PC-9 (cell line): ENCODE measurements at regions of chrX and their contacts with region 1.

Region 1: DNA sequence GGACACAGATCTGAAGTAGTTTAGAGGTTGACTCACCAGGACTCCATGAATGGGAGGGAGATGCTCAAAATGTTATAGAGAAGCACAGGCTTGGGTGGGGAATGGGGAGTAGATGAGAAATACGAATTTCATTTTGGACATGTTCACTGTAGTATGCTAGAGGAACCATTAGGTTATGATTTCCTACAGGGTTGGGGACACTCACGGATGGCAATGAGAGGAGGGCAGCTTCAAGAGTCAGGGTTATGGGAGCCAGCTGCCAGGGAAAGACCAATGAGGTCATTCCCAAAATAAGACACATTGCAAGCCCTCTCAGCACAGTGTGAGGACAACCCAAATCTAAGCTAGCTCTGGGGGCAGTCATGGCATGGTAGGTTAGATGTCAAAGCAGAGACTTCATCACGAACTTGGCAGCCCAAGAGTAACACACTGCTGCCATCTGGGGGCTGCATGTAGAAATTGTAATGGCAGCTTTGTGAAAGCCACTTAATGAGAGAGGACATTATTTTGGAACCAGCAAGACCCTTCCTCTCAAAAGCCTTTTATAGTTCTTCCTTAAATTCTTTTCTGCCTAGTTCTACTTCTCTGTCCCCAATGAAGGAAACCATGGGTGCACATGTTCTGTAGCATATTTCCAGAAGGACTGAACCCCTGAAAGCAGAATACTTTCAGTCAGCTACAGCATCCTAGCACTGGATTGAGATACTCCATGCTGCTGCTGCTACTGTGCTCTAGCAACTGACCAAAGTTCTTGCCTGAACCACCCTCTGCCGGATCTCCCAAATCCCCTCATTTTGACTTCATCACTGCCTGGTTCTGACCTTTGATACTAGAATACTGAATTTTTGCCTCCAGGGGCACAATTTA is 16.2 kb upstream of the ZCCHC12 start:
- DNase-seq: peak; percentile 44 to 53
- H3K4me3 ChIP-seq: no peak overlapping the region
- H3K27ac ChIP-seq: no peak overlapping the region
- H3K4me1 ChIP-seq: no peaks in the 10 kb centered on the region
- H3K27me3 ChIP-seq: no peaks in the 10 kb centered on the region
- CTCF ChIP-seq: peak; percentile 88

Region 2: DNA sequence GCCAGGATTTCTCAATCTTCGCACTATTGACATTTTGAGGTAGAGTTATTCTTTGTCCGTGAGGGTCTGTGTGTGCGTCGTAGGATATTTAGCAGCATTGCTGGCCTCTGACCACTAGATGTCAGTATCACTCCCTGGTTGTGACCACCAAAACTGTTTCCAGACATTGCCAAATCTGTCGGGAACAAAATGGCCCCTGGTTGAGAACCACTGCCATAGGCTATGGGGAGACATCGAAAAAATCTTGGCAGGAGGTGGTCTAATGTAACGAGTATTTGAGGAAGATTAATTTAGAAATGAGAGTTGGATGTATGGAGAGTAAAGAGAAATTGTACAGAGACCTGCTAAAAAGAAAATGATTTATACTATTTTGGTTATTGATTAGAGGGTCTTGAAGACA is 203.4 kb before region 1 on chrX:
- CTCF ChIA-PET with region 1: interaction called, 5 read pairs
- POLR2A ChIA-PET with region 1: no interaction called
- intact Hi-C with region 1: loop called (anchors 1 kb)
- DNase-seq: peak; percentile 33 to 35
- H3K4me3 ChIP-seq: no peak overlapping the region
- H3K27ac ChIP-seq: no peak overlapping the region
- H3K4me1 ChIP-seq: 0 out of 2 replicates have a peak, but pooled peaks cover 7% of the 10 kb centered on the region
- H3K27me3 ChIP-seq: no peaks in the 10 kb centered on the region
- CTCF ChIP-seq: peak; percentile 87

Region 3: DNA sequence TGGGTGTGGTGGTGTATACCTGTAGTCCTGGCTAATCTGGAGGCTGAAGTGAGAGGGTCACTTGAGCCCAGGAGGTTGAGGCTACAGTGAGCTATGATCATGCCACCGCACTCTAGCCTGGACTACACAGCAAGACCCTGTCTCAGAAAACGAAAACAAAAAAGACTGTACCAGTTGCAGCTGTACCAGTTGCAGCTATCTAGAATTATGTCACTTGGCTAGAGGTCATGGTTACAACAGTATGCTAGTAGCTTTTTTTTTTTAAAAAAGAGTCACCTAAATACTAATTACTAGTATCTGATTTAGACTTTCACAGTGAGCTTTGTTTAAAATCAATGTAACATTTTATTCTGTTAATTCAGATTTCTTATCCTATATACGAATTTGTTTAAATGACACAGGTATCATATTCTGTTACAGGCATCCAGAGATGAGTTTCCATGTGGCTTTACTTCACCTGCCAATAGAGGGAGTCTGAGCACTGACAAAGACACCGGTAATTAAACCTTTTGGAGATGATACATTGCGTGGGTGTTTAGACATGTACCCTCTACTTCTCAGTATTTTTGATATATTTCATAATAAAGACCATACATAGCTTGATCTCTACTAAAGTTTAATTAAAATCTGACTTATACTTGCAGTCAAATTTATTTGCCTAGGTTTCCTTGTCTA is 180.2 kb before region 1 on chrX:
- CTCF ChIA-PET with region 1: interaction called, 5 read pairs
- POLR2A ChIA-PET with region 1: no interaction called
- intact Hi-C with region 1: loop called (anchors 1 kb)
- DNase-seq: peak in 1 of 2 experiments; percentile 46
- H3K4me3 ChIP-seq: no peak overlapping the region
- H3K27ac ChIP-seq: no peak overlapping the region
- H3K4me1 ChIP-seq: no peaks in the 10 kb centered on the region
- H3K27me3 ChIP-seq: no peaks in the 10 kb centered on the region
- CTCF ChIP-seq: peak; percentile 74

Region 4: DNA sequence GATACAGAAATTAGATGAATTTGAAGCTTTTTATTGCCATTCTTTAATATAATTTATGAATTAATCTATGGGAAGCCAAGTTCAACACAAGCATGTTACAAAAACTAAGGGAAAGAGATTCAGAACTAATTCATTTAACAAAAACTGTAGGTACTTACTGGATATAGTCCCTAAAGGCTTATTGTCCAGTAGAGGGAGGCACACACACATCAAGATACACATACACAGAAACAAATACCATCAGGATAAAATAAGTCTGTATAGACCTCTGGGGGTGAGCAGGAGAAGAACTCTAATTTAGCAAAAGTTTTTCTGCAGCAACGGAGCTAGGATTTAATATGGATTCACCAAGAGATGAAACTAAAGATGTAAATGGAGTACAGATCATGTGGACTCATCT is 163.0 kb before region 1 on chrX:
- CTCF ChIA-PET with region 1: interaction called, 7 read pairs
- POLR2A ChIA-PET with region 1: interaction called, 6 read pairs
- intact Hi-C with region 1: loop called (anchors 1 kb)
- DNase-seq: peak; percentile 2 to 63
- H3K4me3 ChIP-seq: no peak overlapping the region
- H3K27ac ChIP-seq: no peak overlapping the region
- H3K4me1 ChIP-seq: no peaks in the 10 kb centered on the region
- H3K27me3 ChIP-seq: no peaks in the 10 kb centered on the region
- CTCF ChIP-seq: peak; percentile 77